Esophagus squamous epithelium (tissue), 5 donors: ENCODE measurements at regions of chr2 and their contacts with region 1.

Region 1: GRCh38 chr2:218257390-218257981 is 3.3 kb upstream of the GPBAR1 start:
- DNase-seq: no peak
- H3K4me3 ChIP-seq: no peak overlapping the region
- H3K27ac ChIP-seq: peak overlapping the region in 3 of 4 donors; percentile 18 to 57 (median 30)
- H3K4me1 ChIP-seq: peaks cover 17 to 58% (median 30%) of the 10 kb centered on the region in 3 donors
- H3K27me3 ChIP-seq: no peaks in the 10 kb centered on the region
- CTCF ChIP-seq: peak; percentile 38 to 75 (median 56)
- POLR2A ChIP-seq: no peak

Region 2: GRCh38 chr2:218186355-218186766 is 71.1 kb before region 1 on chr2:
- intact Hi-C with region 1: loop called (anchors 5 kb)
- DNase-seq: no peak
- H3K4me3 ChIP-seq: peak overlapping the region in 1 of 4 donors; percentile 19
- H3K27ac ChIP-seq: peak overlapping the region in 1 of 4 donors; percentile 3
- H3K4me1 ChIP-seq: peaks cover 0 to 19% (median 7%) of the 10 kb centered on the region in 3 donors
- H3K27me3 ChIP-seq: peaks cover 0 to 5% (median 0%) of the 10 kb centered on the region in 4 donors
- CTCF ChIP-seq: peak; percentile 77 to 90 (median 84)
- POLR2A ChIP-seq: no peak